Heart left ventricle (tissue), 16 donors: ENCODE measurements at regions of chrX and their contacts with region 1.

Region 1: GRCh38 chrX:136880452-136881013 is at the start of gene RBMX:
- DNase-seq: peak; percentile 88 to 94 (median 92)
- ATAC-seq: peak; percentile 95 to 97 (median 96)
- H3K4me3 ChIP-seq: peak within 1 kb of the TSS; percentile 57 to 97 (median 78)
- H3K27ac ChIP-seq: peak within 1 kb of the TSS; percentile 88 to 99 (median 94)
- H3K4me1 ChIP-seq: peaks cover 0 to 11% (median 6%) of the 10 kb centered on the region in 12 donors
- H3K27me3 ChIP-seq: no peaks in the 10 kb centered on the region
- CTCF ChIP-seq: no peak
- POLR2A ChIP-seq: peak; percentile 26 to 92
- total RNA-seq, gene RBMX: 65.0 to 182 (median 90.7) TPM

Region 2: GRCh38 chrX:136780763-136781162 is 99.8 kb before region 1 on chrX and contains the start of gene ARHGEF6:
- intact Hi-C with region 1: no loop called
- DNase-seq: peak in 1 of 5 donors; percentile 34
- ATAC-seq: peak in 2 of 4 donors; percentile 53 to 59
- H3K4me3 ChIP-seq: peak within 1 kb of the TSS in 11 of 12 donors; percentile 0 to 58 (median 43)
- H3K27ac ChIP-seq: peak within 1 kb of the TSS; percentile 24 to 85 (median 61)
- H3K4me1 ChIP-seq: peaks cover 0 to 17% (median 9%) of the 10 kb centered on the region in 12 donors
- H3K27me3 ChIP-seq: no peaks in the 10 kb centered on the region
- CTCF ChIP-seq: no peak
- POLR2A ChIP-seq: no peak
- total RNA-seq, gene ARHGEF6: 40.0 to 74.7 (median 61.0) TPM

Region 3: GRCh38 chrX:136816970-136817369 is 63.6 kb before region 1 on chrX:
- intact Hi-C with region 1: no loop called
- DNase-seq: no peak
- ATAC-seq: no peak
- H3K4me3 ChIP-seq: no peak overlapping the region
- H3K27ac ChIP-seq: no peak overlapping the region
- H3K4me1 ChIP-seq: no peaks in the 10 kb centered on the region
- H3K27me3 ChIP-seq: peaks cover 0 to 5% (median 0%) of the 10 kb centered on the region in 9 donors
- CTCF ChIP-seq: no peak
- POLR2A ChIP-seq: no peak

Region 4: GRCh38 chrX:136909706-136910564 is 29.4 kb after region 1 on chrX:
- intact Hi-C with region 1: loop called in 2 of 10 experiments (anchors 2 kb)
- DNase-seq: peak; percentile 54 to 83 (median 81)
- ATAC-seq: peak; percentile 80 to 89 (median 88)
- H3K4me3 ChIP-seq: peak overlapping the region; percentile 33 to 79 (median 64)
- H3K27ac ChIP-seq: peak overlapping the region; percentile 54 to 87 (median 81)
- H3K4me1 ChIP-seq: peaks cover 0 to 10% (median 0%) of the 10 kb centered on the region in 12 donors
- H3K27me3 ChIP-seq: no peaks in the 10 kb centered on the region
- CTCF ChIP-seq: peak in 1 of 12 donors; percentile 2
- POLR2A ChIP-seq: no peak